Activated T-helper 2 cell treated with anti-CD3 and anti-CD28 coated beads, Interferon-gamma antibody, Interleukin-2, Interleukin-4, amounts not matched to agents 10 μg/mL and 5 μg/mL and 100 μg/mL, durations not matched to agents 14 hours and 24 hours and 36 hours (primary cell): ENCODE measurements at regions of chr6 and their contacts with region 1.

Region 1: GRCh38 chr6:135145063-135145800 is 35.9 kb upstream of the MYB start:
- DNase-seq: no peak
- H3K4me3 Mint-ChIP-seq: peak overlapping the region; percentile 55
- H3K27ac Mint-ChIP-seq: peak overlapping the region; percentile 89
- H3K4me1 Mint-ChIP-seq: peaks cover 64% of the 10 kb centered on the region
- H3K27me3 Mint-ChIP-seq: no peaks in the 10 kb centered on the region

Region 2: GRCh38 chr6:135162678-135163439 is 17.6 kb after region 1 on chr6:
- intact Hi-C with region 1: loop called (anchors 1 kb)
- DNase-seq: no peak
- H3K4me3 Mint-ChIP-seq: peak overlapping the region; percentile 31
- H3K27ac Mint-ChIP-seq: peak overlapping the region; percentile 98
- H3K4me1 Mint-ChIP-seq: peaks cover 66% of the 10 kb centered on the region
- H3K27me3 Mint-ChIP-seq: no peaks in the 10 kb centered on the region

Region 3: GRCh38 chr6:135191508-135192255 is 46.5 kb after region 1 on chr6:
- intact Hi-C with region 1: no loop called
- DNase-seq: no peak
- H3K4me3 Mint-ChIP-seq: no peak overlapping the region
- H3K27ac Mint-ChIP-seq: peak overlapping the region; percentile 76
- H3K4me1 Mint-ChIP-seq: peaks cover 62% of the 10 kb centered on the region
- H3K27me3 Mint-ChIP-seq: no peaks in the 10 kb centered on the region

Region 4: DNA sequence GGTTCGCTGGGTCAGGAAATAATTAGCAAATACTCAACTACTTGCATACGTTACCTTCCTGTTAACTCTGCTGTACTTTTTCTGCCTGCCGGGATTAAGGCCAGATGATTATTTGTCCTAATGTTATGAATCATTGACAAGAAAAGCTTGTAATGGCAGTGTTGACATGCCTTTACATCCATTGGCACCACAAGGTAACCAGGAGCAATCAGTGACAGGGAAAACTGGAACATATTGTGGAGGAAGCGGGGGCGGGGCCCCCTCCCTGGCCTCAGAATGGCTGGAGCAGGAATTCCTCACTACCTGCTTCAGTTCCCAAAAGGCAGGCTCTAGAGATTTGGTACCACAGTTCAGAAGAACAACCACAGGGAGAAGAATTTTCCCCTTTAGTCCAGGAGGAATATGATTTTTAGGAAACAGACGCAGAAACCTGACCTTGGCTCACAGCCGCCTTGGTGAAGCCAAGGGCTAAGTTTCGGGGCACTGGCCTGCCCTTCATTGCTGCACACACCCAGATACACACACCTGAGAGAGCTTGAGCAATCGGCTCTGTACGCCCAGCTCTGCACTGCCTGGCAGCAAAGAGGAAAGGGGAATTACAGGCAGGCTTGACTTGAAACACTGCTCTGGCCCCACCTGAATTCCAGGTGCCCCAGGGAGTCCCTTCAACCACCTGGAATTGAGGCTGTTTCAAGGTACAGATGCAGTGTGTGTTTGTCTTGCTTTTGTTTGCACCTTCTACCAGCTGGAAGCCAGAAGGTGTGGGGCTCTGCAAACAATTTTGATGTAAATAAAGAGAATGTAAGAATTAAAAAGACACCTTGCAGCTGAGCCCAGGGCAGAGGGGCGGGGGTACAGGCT is 125.7 kb after region 1 on chr6:
- intact Hi-C with region 1: no loop called
- DNase-seq: no peak
- H3K4me3 Mint-ChIP-seq: no peak overlapping the region
- H3K27ac Mint-ChIP-seq: no peak overlapping the region
- H3K4me1 Mint-ChIP-seq: peaks cover 4% of the 10 kb centered on the region
- H3K27me3 Mint-ChIP-seq: peaks cover 2% of the 10 kb centered on the region

Region 5: GRCh38 chr6:135438907-135439535 is 293.8 kb after region 1 on chr6:
- intact Hi-C with region 1: loop called (anchors 5 kb)
- DNase-seq: no peak
- H3K4me3 Mint-ChIP-seq: peak overlapping the region; percentile 37
- H3K27ac Mint-ChIP-seq: peak overlapping the region; percentile 75
- H3K4me1 Mint-ChIP-seq: peaks cover 35% of the 10 kb centered on the region
- H3K27me3 Mint-ChIP-seq: no peaks in the 10 kb centered on the region